RWPE1 (cell line): ENCODE measurements at regions of chr10 and their contacts with region 1.

Region 1: DNA sequence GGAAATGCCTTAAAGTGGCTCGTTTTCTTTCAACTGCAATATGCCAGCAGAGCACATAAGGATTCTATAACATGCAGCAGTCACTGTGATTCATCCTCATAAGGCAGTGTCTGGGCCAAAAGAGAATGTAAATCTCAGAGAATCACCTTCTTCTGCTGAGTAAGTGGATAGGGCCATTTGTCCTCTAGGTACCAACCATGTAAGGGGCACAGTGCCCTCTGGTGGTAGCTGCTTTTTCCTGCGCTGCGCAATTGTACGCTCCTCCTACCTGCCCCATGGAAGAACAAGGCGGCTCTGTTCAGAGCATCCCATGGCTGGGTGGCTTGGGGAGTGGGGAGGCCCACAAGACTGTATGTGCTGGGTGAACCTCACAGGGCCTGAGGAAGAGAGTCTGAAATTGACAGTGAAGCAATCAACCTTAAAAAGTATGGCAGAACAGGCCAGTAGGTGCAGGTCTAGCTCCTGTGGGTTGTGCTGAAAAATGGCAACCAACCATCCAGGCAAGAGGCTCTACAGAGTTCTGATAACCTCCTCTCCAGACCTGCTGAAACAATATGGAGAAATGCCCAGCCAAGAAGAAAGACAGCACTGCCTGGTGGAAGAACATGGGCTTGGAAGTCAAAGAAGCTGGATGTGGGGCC is 78.6 kb upstream of the C10orf90 start:
- DNase-seq: peak; percentile 66
- H3K27ac ChIP-seq: no peak overlapping the region
- CTCF ChIP-seq: peak; percentile 66

Region 2: GRCh38 chr10:125936331-125936730 is 812.8 kb before region 1 on chr10:
- CTCF ChIA-PET with region 1: interaction called, 13 read pairs
- POLR2A ChIA-PET with region 1: no interaction called
- DNase-seq: no peak
- H3K27ac ChIP-seq: no peak overlapping the region
- CTCF ChIP-seq: no peak

Region 3: GRCh38 chr10:126759531-126759930 is 10.4 kb after region 1 on chr10:
- CTCF ChIA-PET with region 1: interaction called, 4 read pairs
- POLR2A ChIA-PET with region 1: interaction called, 12 read pairs
- DNase-seq: no peak
- H3K27ac ChIP-seq: no peak overlapping the region
- CTCF ChIP-seq: no peak